Right ventricle myocardium inferior (tissue), 1 donor: ENCODE measurements at regions of chr2 and their contacts with region 1.

Region 1: GRCh38 chr2:60053791-60054190 is 499.7 kb downstream of the BCL11A start:
- DNase-seq: no peak
- ATAC-seq: no peak

Region 2: DNA sequence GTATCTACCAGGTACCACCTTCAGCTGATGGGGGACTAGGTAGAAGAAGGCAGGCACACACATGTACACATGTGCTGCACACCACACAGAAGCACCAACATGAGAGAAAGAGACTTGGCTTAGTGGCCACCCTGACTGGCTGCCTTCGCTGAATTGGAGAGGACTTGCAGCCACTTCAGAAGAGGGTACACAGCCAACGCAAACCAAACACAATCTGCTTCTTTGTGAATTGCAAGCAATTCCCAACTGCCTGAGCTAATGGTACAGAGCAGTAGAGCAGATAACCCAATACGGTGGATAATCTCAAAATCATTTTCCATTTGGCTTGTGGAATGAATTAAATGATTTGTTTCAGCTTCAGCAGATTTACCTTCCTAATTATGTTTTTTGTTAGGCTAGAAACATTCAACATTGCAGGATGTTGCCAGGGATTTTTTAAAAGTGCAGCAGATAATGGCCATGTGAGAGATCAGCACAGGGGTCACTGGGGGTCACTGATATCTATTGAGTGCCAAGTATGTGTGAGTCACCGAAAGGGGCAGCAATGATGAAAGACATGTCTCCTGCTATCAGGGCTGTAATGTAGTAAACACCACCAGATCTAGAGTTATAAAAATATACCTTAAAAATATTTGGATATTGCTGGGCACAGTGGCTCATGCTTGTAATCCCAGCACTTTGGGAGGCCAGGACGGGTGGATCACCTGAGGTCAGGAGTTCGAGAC is 152.9 kb before region 1 on chr2:
- intact Hi-C with region 1: loop called (anchors 10 kb)
- DNase-seq: no peak
- ATAC-seq: peak; percentile 68

Region 3: DNA sequence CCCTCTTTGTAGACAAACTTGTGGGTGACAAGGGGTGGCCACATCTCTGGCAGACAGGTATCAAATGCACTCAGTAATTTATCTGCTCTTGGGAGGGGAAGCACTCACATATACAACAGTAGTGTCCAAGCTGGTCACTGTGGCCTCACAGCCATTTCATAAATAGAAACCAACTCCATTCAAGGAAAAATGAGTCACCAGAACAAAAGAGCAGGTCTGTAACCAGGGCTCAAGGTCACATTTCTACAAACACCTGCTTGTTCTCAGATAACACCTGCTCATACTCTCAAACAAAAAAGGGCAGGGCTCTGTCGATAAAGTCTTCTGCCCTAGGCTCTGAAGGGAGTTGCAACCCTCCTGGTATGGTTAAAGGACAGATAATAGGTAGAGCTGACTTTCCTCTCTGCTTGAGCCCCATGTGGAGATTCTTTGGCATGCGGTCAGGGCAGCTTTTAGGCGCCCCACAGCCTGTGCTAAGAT is 40.7 kb after region 1 on chr2:
- intact Hi-C with region 1: loop called (anchors 5 kb)
- DNase-seq: no peak
- ATAC-seq: peak; percentile 70

Region 4: DNA sequence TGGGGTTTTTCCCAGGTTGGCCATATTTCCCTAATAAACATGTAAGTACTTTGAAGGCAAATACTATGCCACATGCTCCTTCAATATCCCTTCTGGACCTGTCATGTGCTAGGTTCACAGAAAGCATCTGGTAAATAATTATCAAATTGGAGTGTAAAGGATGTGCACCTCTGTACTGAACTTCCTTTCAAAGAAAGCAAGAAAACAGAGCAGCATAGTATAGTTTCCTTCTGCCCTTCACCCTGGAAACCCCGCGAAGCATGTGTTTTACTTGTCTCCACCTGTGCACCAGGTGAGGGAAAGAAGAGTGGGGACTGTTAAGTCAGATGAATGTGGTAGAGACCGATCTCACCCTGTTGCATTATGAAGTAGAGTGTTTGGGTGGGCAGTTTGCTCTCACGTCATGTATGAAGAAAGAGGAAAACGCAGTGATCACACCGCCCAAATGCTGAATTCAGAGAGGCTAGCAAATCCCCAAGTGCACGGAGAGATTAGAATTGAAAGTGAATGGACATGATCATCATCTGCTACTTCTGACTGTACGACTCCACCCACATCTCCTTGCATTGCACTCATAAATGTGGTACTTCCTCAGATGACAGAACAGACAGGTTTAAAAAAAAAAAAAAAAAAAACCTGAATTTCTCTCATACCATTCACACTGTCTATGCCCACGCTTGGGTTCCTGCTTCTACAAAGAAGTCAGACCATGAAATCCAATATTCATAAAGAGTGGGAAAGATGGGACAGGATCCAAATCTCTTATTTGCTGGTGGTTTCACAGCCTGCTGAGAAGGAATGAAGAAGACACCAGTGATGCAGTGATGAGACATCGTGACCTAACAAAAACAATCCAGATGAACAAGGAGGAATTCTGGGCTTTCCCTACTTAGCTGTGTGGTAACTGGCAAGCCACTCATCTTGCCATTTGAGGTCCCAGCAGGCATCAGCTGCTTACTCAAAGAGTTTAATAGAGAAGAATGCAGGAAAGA is 51.0 kb after region 1 on chr2:
- intact Hi-C with region 1: loop called (anchors 5 kb)
- DNase-seq: no peak
- ATAC-seq: no peak